ENCODE measurements at regions of chr5 and their contacts with region 1.

Region 1: GRCh38 chr5:170338933-170339779 is 41.6 kb upstream of the LCP2 start:
- DNase-seq: peak; percentile 64
- H3K4me3 ChIP-seq: no peak overlapping the region
- H3K27ac ChIP-seq: no peak overlapping the region
- H3K4me1 ChIP-seq: no peaks in the 10 kb centered on the region
- CTCF ChIP-seq: peak; percentile 81

Region 2: DNA sequence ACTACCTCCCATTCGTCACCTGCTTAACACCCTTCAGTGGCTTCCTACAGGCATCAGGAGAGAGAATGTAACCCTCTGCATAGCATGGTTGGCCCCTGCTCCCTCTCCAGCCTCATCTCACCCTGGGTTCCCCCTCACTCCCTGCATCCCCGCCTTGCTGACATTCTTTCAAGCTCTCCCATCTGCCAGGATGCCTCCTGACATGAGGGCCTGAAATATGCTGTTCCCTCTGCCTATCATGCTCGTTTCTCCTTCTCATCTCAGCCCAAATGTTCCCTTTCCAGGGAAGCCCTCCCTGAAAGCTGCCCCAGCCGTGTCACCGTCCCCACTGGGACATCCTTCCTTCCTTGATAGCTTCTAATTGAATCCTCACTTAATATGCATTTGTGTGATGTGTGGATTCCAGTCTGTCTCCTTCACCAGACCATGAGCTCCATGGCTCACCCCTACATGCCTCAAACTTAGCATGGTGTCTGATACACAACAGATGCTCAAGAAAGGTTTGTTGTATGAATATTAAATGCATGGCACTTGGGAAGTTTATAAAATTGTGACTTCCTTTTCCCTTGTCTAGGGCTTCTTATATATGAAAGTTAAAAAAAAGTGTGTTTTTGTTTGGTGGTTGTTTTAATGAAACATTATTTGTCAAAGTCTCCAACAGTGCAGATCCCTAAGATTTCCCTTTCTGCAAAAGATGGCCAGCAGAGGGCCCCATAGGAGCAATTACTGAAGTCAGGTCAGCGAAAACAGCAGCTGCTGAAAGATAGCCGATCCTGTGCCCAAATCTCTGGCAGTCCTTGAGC is 113.6 kb before region 1 on chr5:
- CTCF ChIA-PET with region 1: no interaction called
- POLR2A ChIA-PET with region 1: no interaction called
- intact Hi-C with region 1: loop called (anchors 1 kb)
- DNase-seq: peak; percentile 56
- H3K4me3 ChIP-seq: no peak overlapping the region
- H3K27ac ChIP-seq: no peak overlapping the region
- H3K4me1 ChIP-seq: no peaks in the 10 kb centered on the region
- CTCF ChIP-seq: peak; percentile 93

Region 3: GRCh38 chr5:170267431-170268152 is 71.6 kb before region 1 on chr5:
- CTCF ChIA-PET with region 1: no interaction called
- POLR2A ChIA-PET with region 1: no interaction called
- intact Hi-C with region 1: loop called (anchors 1 kb)
- DNase-seq: peak; percentile 74
- H3K4me3 ChIP-seq: no peak overlapping the region
- H3K27ac ChIP-seq: no peak overlapping the region
- H3K4me1 ChIP-seq: peaks cover 6% of the 10 kb centered on the region
- CTCF ChIP-seq: peak; percentile 95

Measured in OCI-LY7 (cell line).